MCF 10A (cell line): ENCODE measurements at regions of chr7 and their contacts with region 1.

Region 1: DNA sequence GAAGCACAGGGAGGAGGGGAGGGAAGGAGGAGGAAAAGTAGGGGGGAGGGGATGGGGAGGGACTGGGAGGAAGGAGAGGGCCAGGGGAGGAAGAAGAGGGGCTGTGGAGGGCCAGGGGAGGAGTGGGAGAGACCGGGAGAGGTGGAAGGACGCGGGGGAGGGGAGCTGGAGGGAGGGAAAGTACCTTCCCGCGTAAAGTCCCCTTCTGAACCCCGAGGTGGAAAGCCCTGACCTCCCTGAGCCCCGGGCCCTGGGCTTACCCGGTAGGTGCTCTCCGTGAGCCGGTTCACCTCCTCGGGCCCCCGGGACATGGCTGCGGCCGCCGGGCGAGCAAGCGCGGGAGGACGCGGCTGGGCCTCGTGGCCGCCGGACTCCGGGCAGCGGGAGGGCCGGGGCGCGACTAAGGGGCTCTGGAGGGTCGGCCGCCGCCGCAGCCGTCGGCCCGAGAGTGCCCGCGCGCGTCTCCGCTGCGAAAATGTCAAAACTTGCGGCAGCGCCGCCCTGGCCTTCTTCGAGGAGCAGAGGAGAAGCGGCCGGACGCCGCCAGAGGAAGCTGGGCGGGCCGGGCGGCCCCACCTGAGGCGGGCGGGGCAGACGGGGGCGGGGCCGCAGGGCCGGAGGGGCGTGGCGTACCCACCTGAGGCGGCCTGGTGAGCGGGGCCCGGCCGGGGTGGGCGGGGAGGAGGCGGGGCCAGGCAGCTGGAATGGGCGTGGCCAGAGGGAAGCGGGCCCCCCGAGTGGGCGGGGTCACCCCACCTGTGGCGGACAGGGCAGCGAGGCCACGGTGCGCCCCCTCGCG is at the start of gene BAIAP2L1:
- DNase-seq: peak; percentile 91
- H3K4me3 Mint-ChIP-seq: peak within 1 kb of the TSS; percentile 85
- H3K27ac Mint-ChIP-seq: peak within 1 kb of the TSS; percentile 94
- H3K4me1 Mint-ChIP-seq: peaks cover 17% of the 10 kb centered on the region
- H3K27me3 Mint-ChIP-seq: no peaks in the 10 kb centered on the region
- CTCF ChIP-seq: no peak
- total RNA-seq, gene BAIAP2L1: 60.2 and 60.7 TPM in 2 replicates

Region 2: GRCh38 chr7:98280791-98281756 is 119.7 kb before region 1 on chr7 and contains the start of gene BRI3:
- CTCF ChIA-PET with region 1: interaction called, 7 read pairs
- POLR2A ChIA-PET with region 1: interaction called, 60 read pairs
- intact Hi-C with region 1: loop called (anchors 1 kb)
- DNase-seq: peak; percentile 90
- H3K4me3 Mint-ChIP-seq: peak within 1 kb of the TSS; percentile 91
- H3K27ac Mint-ChIP-seq: peak within 1 kb of the TSS; percentile 87
- H3K4me1 Mint-ChIP-seq: peaks cover 23% of the 10 kb centered on the region
- H3K27me3 Mint-ChIP-seq: no peaks in the 10 kb centered on the region
- CTCF ChIP-seq: peak; percentile 9
- total RNA-seq, gene BRI3: 154 and 246 TPM in 2 replicates

Region 3: GRCh38 chr7:98294796-98295382 is 105.9 kb before region 1 on chr7:
- CTCF ChIA-PET with region 1: interaction called, 33 read pairs
- POLR2A ChIA-PET with region 1: interaction called, 8 read pairs
- intact Hi-C with region 1: loop called (anchors 1 kb)
- DNase-seq: peak; percentile 72
- H3K4me3 Mint-ChIP-seq: no peak overlapping the region
- H3K27ac Mint-ChIP-seq: peak overlapping the region; percentile 79
- H3K4me1 Mint-ChIP-seq: no peaks in the 10 kb centered on the region
- H3K27me3 Mint-ChIP-seq: no peaks in the 10 kb centered on the region
- CTCF ChIP-seq: peak; percentile 84

Region 4: DNA sequence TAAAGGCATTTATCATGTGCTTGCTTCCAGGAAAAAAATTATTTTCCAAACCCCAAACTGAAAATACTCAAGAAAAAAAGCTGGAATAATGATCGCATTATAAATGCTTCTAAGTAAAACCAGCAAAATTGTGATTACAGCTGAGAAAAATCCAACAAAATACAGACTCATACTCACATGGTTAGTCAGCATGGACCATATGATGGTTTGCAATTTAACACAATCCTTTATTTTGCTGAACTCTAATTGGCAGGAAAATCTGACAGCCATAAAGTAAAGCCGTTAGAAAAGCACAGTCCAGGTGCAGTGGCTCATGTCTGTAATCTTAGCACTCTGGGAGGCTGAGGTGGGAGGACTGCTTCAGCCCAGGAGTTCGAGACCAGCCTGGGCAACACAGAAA is 59.6 kb before region 1 on chr7:
- CTCF ChIA-PET with region 1: no interaction called
- POLR2A ChIA-PET with region 1: no interaction called
- intact Hi-C with region 1: no loop called
- DNase-seq: no peak
- H3K4me3 Mint-ChIP-seq: no peak overlapping the region
- H3K27ac Mint-ChIP-seq: no peak overlapping the region
- H3K4me1 Mint-ChIP-seq: no peaks in the 10 kb centered on the region
- H3K27me3 Mint-ChIP-seq: no peaks in the 10 kb centered on the region
- CTCF ChIP-seq: no peak

Region 5: GRCh38 chr7:98354511-98355257 is 46.1 kb before region 1 on chr7:
- CTCF ChIA-PET with region 1: interaction called, 19 read pairs
- POLR2A ChIA-PET with region 1: interaction called, 51 read pairs
- intact Hi-C with region 1: loop called (anchors 1 kb)
- DNase-seq: peak; percentile 96
- H3K4me3 Mint-ChIP-seq: peak overlapping the region; percentile 57
- H3K27ac Mint-ChIP-seq: peak overlapping the region; percentile 94
- H3K4me1 Mint-ChIP-seq: peaks cover 40% of the 10 kb centered on the region
- H3K27me3 Mint-ChIP-seq: no peaks in the 10 kb centered on the region
- CTCF ChIP-seq: no peak

Region 6: GRCh38 chr7:98360221-98361124 is 40.3 kb before region 1 on chr7:
- CTCF ChIA-PET with region 1: interaction called, 19 read pairs
- POLR2A ChIA-PET with region 1: interaction called, 51 read pairs
- intact Hi-C with region 1: no loop called
- DNase-seq: no peak
- H3K4me3 Mint-ChIP-seq: no peak overlapping the region
- H3K27ac Mint-ChIP-seq: no peak overlapping the region
- H3K4me1 Mint-ChIP-seq: peaks cover 16% of the 10 kb centered on the region
- H3K27me3 Mint-ChIP-seq: no peaks in the 10 kb centered on the region
- CTCF ChIP-seq: no peak

Region 7: GRCh38 chr7:98372993-98373392 is 27.7 kb before region 1 on chr7:
- CTCF ChIA-PET with region 1: interaction called, 7 read pairs
- POLR2A ChIA-PET with region 1: interaction called, 24 read pairs
- intact Hi-C with region 1: loop called (anchors 2 kb)
- DNase-seq: peak; percentile 84
- H3K4me3 Mint-ChIP-seq: peak overlapping the region; percentile 19
- H3K27ac Mint-ChIP-seq: peak overlapping the region; percentile 79
- H3K4me1 Mint-ChIP-seq: peaks cover 19% of the 10 kb centered on the region
- H3K27me3 Mint-ChIP-seq: no peaks in the 10 kb centered on the region
- CTCF ChIP-seq: no peak

Region 8: GRCh38 chr7:98420966-98421612 is 20.3 kb after region 1 on chr7:
- CTCF ChIA-PET with region 1: interaction called, 33 read pairs
- POLR2A ChIA-PET with region 1: interaction called, 23 read pairs
- intact Hi-C with region 1: no loop called
- DNase-seq: peak; percentile 87
- H3K4me3 Mint-ChIP-seq: no peak overlapping the region
- H3K27ac Mint-ChIP-seq: no peak overlapping the region
- H3K4me1 Mint-ChIP-seq: peaks cover 16% of the 10 kb centered on the region
- H3K27me3 Mint-ChIP-seq: no peaks in the 10 kb centered on the region
- CTCF ChIP-seq: peak; percentile 98